ENCODE measurements at regions of chr6 and their contacts with region 1.

Region 1: GRCh38 chr6:52664186-52664990 is 6.5 kb upstream of the TMEM14A start:
- DNase-seq: peak; percentile 96
- ATAC-seq: peak; percentile 97
- H3K4me3 ChIP-seq: peak overlapping the region; percentile 81
- H3K27ac ChIP-seq: peak overlapping the region; percentile 56
- H3K4me1 ChIP-seq: peaks cover 4% of the 10 kb centered on the region
- H3K27me3 ChIP-seq: no peaks in the 10 kb centered on the region
- CTCF ChIP-seq: no peak
- POLR2A ChIP-seq: peak; percentile 94
- RAD21 ChIP-seq: no peak

Region 2: GRCh38 chr6:52162940-52163908 is 501.2 kb before region 1 on chr6:
- CTCF ChIA-PET with region 1: no interaction called
- POLR2A ChIA-PET with region 1: no interaction called
- dilution Hi-C with region 1: no loop called
- in situ Hi-C with region 1: no loop called
- intact Hi-C with region 1: loop called (anchors 2 kb)
- DNase-seq: peak; percentile 30
- ATAC-seq: peak; percentile 53; the same call in 1 of the 2 replicates
- H3K4me3 ChIP-seq: no peak overlapping the region
- H3K27ac ChIP-seq: no peak overlapping the region
- H3K4me1 ChIP-seq: no peaks in the 10 kb centered on the region
- H3K27me3 ChIP-seq: no peaks in the 10 kb centered on the region; the same call in 1 of the 2 replicates
- CTCF ChIP-seq: peak; percentile 72
- POLR2A ChIP-seq: no peak
- RAD21 ChIP-seq: peak; percentile 71

Region 3: DNA sequence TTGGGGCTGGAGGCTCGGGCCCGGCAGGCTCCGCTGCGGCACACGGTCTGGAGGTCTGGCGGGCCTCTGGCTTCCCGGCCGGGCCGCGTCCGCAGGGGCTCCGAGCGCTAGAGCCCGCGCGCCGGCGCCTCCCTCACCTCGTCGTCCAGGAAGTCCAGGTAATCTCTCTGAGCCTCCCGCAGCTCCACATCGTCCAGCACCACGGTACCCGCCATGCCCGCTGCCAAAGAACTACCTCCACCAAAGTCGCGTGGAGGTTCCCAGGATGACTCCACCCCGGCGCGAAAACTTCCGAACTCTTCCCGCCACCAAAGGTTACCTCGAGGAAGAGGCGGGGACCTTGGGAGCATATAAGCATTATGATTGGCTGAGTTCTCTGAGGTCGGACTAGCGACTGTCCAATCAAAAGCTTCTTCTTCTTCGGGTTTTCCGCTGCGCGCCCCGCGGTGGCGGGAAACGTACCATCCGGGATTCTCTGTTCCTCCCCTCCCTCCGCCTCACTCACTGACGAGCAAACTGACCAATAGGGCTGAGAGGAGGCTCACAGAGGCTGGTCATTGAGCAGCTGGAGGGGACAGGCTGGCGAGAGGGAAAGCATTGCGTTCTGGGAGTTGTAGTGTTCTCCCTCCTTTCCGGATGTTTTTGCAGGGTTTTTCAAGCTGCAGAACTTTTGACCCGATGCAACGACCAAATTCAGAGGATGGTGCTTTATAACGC is 379.8 kb before region 1 on chr6 and contains the start of gene MCM3:
- CTCF ChIA-PET with region 1: no interaction called
- POLR2A ChIA-PET with region 1: no interaction called
- dilution Hi-C with region 1: no loop called
- in situ Hi-C with region 1: loop called (anchors 5 kb)
- intact Hi-C with region 1: loop called (anchors 2 kb)
- DNase-seq: peak; percentile 99
- ATAC-seq: peak; percentile 99
- H3K4me3 ChIP-seq: peak within 1 kb of the TSS; percentile 65
- H3K27ac ChIP-seq: peak within 1 kb of the TSS; percentile 31; the same call in 1 of the 2 replicates
- H3K4me1 ChIP-seq: no peaks in the 10 kb centered on the region
- H3K27me3 ChIP-seq: no peaks in the 10 kb centered on the region
- CTCF ChIP-seq: peak; percentile 18; the same call in 1 of the 2 replicates
- POLR2A ChIP-seq: no peak; the same call in 1 of the 2 replicates
- RAD21 ChIP-seq: no peak
- total RNA-seq, gene MCM3: 66.5 and 76.7 TPM in 2 replicates

Region 4: GRCh38 chr6:52407467-52407866 is 256.9 kb before region 1 on chr6:
- CTCF ChIA-PET with region 1: interaction called, 19 read pairs
- POLR2A ChIA-PET with region 1: interaction called, 6 read pairs
- dilution Hi-C with region 1: loop called (anchors 25 kb)
- in situ Hi-C with region 1: no loop called
- intact Hi-C with region 1: loop called (anchors 1 kb)
- DNase-seq: peak; percentile 61
- ATAC-seq: peak; percentile 52
- H3K4me3 ChIP-seq: no peak overlapping the region
- H3K27ac ChIP-seq: no peak overlapping the region
- H3K4me1 ChIP-seq: peaks cover 9% of the 10 kb centered on the region
- H3K27me3 ChIP-seq: no peaks in the 10 kb centered on the region
- CTCF ChIP-seq: peak; percentile 64
- POLR2A ChIP-seq: no peak
- RAD21 ChIP-seq: peak; percentile 74

Region 5: DNA sequence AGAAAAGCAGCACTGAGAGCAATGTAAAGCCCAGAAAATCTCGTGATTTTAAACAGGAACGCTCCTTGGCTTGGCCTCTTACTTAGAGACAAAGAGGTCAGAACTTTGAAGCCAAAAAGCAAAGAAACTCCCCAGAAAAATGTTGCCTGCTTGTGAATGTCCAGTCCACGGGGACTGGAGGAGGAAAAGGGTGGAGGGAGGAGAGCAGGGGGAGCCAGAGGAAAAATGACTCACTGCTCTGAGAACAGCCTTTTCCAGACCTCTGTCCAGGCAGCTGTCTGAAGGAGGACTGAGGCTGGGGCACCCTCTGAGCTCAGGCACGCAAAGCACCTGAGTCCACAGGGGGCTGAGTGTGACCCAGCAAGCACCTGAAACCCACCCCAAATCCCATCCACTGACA is 152.2 kb before region 1 on chr6:
- CTCF ChIA-PET with region 1: no interaction called
- POLR2A ChIA-PET with region 1: no interaction called
- dilution Hi-C with region 1: no loop called
- in situ Hi-C with region 1: no loop called
- intact Hi-C with region 1: loop called (anchors 5 kb)
- DNase-seq: peak; percentile 88
- ATAC-seq: peak; percentile 84
- H3K4me3 ChIP-seq: no peak overlapping the region
- H3K27ac ChIP-seq: peak overlapping the region; percentile 91
- H3K4me1 ChIP-seq: peaks cover 55% of the 10 kb centered on the region
- H3K27me3 ChIP-seq: no peaks in the 10 kb centered on the region
- CTCF ChIP-seq: no peak
- POLR2A ChIP-seq: no peak
- RAD21 ChIP-seq: no peak

Region 6: DNA sequence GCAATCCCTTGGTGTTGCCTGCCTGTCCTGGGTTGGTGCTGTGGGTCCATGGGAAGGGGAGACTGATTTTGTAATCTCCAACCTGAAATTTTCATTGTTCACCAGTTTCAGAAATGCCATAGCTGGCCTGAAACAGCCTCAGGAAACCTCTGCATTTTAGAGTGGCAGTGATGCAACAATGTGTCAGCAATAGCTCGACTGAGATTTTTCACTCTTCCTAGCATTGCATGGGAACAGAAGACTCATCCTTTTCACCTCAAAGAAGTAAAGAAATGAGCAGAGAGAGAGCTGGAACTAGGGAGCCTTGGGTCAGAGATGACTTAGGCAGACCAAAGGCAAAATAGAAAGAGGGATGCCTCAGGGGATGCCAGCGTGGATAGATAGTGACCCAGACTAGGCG is 17.2 kb before region 1 on chr6:
- CTCF ChIA-PET with region 1: interaction called, 10 read pairs
- POLR2A ChIA-PET with region 1: no interaction called
- dilution Hi-C with region 1: no loop called
- in situ Hi-C with region 1: no loop called
- intact Hi-C with region 1: no loop called
- DNase-seq: peak; percentile 72
- ATAC-seq: peak; percentile 22; the same call in 1 of the 2 replicates
- H3K4me3 ChIP-seq: no peak overlapping the region
- H3K27ac ChIP-seq: peak overlapping the region; percentile 16; the same call in 1 of the 2 replicates
- H3K4me1 ChIP-seq: peaks cover 9% of the 10 kb centered on the region
- H3K27me3 ChIP-seq: no peaks in the 10 kb centered on the region
- CTCF ChIP-seq: no peak
- POLR2A ChIP-seq: no peak
- RAD21 ChIP-seq: no peak

Measured in IMR-90 (cell line).